ENCODE measurements at regions of chr5 and their contacts with region 1.

Region 1: GRCh38 chr5:157820593-157821252 is 38.2 kb downstream of the CLINT1 start:
- DNase-seq: no peak
- H3K4me3 ChIP-seq: no peak overlapping the region
- H3K27ac ChIP-seq: peak overlapping the region; percentile 50 to 85 (median 74)
- H3K4me1 ChIP-seq: peaks cover 0 to 78% (median 66%) of the 10 kb centered on the region in 4 donors
- H3K27me3 ChIP-seq: no peaks in the 10 kb centered on the region
- CTCF ChIP-seq: peak in 3 of 4 experiments; percentile 37 to 58 (median 43)
- EP300 ChIP-seq: no peak
- POLR2A ChIP-seq: no peak

Region 2: DNA sequence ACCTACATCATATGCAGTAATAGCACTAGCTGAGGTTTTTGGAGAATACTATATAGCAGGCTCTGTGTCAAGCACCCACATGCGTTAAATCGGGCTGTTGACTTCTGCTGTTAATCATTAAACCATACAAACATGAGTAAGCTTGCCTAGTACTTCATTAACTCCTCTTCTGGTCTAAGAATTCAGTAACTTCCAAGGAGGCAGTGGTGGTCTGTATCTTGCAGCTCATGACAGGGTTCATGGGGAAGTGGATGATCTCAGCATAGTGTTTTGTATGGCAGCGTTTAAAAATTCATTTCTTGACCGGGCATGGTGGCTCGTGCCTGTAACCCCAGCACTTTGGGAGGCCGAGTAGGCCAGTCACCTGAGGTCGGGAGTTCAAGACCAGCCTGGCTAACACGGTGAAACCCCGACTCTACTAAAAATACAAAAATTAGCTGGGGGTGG is 761.6 kb before region 1 on chr5 and contains the start of gene HAVCR1:
- intact Hi-C with region 1: no loop called
- DNase-seq: no peak
- H3K4me3 ChIP-seq: no peak within 1 kb of the TSS
- H3K27ac ChIP-seq: no peak within 1 kb of the TSS
- H3K4me1 ChIP-seq: no peaks in the 10 kb centered on the region
- H3K27me3 ChIP-seq: no peaks in the 10 kb centered on the region
- CTCF ChIP-seq: no peak
- EP300 ChIP-seq: no peak
- POLR2A ChIP-seq: no peak
- total RNA-seq, gene HAVCR1: not detected

Region 3: DNA sequence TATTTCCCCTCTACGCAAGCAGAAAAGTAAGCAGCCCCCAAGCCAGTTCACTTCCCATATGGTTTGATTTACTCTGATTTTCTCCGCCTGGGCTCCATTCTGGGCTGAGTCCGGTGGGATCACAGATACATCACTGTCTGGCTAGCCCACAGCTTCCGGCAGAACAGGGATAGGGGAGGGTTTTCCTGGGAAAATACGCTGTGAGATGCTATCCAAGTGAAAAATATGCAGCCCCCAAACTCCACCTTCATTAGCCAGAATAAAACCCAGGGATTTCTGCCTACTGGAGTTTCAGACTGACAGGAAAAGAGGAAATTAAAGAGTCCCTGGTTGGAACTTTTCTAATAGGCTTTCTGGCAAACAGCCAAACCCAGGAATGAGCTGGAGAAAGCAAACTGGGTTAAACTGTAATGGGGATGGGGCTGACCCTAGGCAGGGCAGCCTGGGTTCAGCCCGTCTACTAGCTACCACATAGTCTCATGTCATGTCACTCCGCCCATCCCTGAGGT is 377.6 kb before region 1 on chr5:
- intact Hi-C with region 1: no loop called
- DNase-seq: no peak
- H3K4me3 ChIP-seq: no peak overlapping the region
- H3K27ac ChIP-seq: no peak overlapping the region
- H3K4me1 ChIP-seq: peaks cover 0 to 22% (median 1%) of the 10 kb centered on the region in 4 donors
- H3K27me3 ChIP-seq: no peaks in the 10 kb centered on the region
- CTCF ChIP-seq: no peak
- EP300 ChIP-seq: no peak
- POLR2A ChIP-seq: no peak

Region 4: DNA sequence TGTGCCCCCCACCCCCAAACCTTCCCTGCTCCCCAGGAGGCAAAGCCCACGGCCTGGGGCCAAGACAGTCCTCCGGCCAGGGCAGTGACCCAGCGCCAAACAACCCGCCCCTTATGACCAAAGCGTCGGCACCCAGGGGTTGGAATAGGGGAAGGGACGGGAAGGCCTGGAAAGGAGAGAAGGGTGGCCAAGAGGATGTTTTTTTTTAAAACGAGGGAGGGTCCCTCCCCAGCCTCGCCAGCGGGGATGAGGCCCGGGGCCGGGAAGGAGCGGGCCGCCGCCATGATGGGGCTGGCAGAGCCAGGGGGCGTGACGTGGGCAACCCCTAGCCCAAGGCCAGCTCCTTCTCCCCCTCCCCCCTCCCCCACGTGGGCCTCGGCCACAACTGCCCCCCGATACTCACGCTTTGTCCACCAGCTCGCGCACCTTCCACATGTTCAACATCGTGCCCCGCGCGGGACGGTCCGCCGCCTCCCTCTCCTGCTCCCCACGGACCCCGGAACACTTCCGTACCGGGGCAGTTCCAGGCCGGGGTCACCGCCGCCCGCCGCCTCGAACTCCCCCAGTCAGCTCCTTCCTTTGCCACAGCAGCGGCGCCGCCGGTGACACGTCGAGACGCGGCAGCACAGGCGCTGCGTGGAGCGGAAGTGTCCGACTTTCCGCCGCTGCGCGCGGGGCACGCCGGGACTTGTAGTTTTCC is 38.0 kb after region 1 on chr5 and contains the start of gene CLINT1:
- intact Hi-C with region 1: loop called (anchors 5 kb)
- DNase-seq: peak; percentile 95
- H3K4me3 ChIP-seq: peak within 1 kb of the TSS; percentile 68 to 96 (median 87)
- H3K27ac ChIP-seq: peak within 1 kb of the TSS; percentile 85 to 91 (median 89)
- H3K4me1 ChIP-seq: peaks cover 0 to 42% (median 33%) of the 10 kb centered on the region in 4 donors
- H3K27me3 ChIP-seq: no peaks in the 10 kb centered on the region
- CTCF ChIP-seq: no peak
- EP300 ChIP-seq: no peak
- POLR2A ChIP-seq: peak; percentile 54 to 73
- total RNA-seq, gene CLINT1: 88.1 to 171 (median 109) TPM

Region 5: GRCh38 chr5:157994906-157995519 is 174.3 kb after region 1 on chr5:
- intact Hi-C with region 1: loop called (anchors 2 kb)
- DNase-seq: peak; percentile 88
- H3K4me3 ChIP-seq: no peak overlapping the region
- H3K27ac ChIP-seq: peak overlapping the region in 3 of 4 donors; percentile 8 to 45 (median 37)
- H3K4me1 ChIP-seq: peaks cover 0 to 9% (median 5%) of the 10 kb centered on the region in 4 donors
- H3K27me3 ChIP-seq: no peaks in the 10 kb centered on the region
- CTCF ChIP-seq: peak; percentile 74 to 80 (median 78)
- EP300 ChIP-seq: no peak
- POLR2A ChIP-seq: no peak

Region 6: DNA sequence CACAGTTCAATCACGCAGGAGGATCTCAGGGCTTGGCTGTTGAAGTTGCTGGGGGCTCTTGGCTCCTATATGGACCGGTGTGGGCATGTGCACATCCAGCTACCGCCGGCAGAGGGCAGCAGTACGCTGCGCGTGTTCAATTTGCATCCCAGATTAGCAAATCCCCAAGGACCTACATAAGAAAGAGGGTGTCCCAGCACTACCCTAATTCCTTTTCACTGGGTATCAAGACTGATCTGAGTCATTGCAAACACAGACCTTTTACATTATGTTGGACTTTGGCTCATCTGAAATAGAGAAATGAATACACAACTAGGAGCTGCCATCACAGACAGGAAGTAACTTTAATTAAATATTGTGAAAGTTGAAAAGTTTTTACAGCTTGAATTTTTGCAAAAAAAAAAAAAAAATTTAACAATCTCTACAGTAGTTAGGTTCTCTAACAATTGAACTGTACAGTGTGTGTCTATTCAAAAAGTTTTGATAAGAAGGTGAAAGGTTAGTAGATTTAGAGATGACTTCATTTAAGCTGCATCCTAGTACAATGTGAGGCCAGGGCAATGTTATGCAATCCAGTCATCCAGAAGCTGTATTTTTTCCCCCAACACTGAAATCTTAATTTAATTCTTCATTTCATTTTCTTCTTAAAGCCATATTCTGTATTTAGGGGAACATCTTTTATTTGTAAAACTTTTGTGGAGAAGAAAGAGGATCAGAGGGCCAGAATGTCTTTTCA is 875.0 kb after region 1 on chr5:
- intact Hi-C with region 1: loop called (anchors 10 kb)
- DNase-seq: peak; percentile 82
- H3K4me3 ChIP-seq: no peak overlapping the region
- H3K27ac ChIP-seq: peak overlapping the region in 3 of 4 donors; percentile 0 to 37 (median 25)
- H3K4me1 ChIP-seq: no peaks in the 10 kb centered on the region
- H3K27me3 ChIP-seq: peaks cover 0 to 20% (median 5%) of the 10 kb centered on the region in 3 donors
- CTCF ChIP-seq: peak; percentile 79 to 96 (median 93)
- EP300 ChIP-seq: no peak
- POLR2A ChIP-seq: no peak